Heart right ventricle (tissue), 16 donors: ENCODE measurements at regions of chr10 and their contacts with region 1.

Region 1: GRCh38 chr10:79184145-79184625 is 115.4 kb downstream of the ZMIZ1 start:
- DNase-seq: no peak
- ATAC-seq: peak in 1 of 8 donors; percentile 28
- H3K4me3 ChIP-seq: no peak overlapping the region
- H3K27ac ChIP-seq: peak overlapping the region; percentile 11 to 91 (median 58)
- H3K4me1 ChIP-seq: peaks cover 73 to 100% (median 100%) of the 10 kb centered on the region in 9 donors
- H3K27me3 ChIP-seq: no peaks in the 10 kb centered on the region
- CTCF ChIP-seq: no peak

Region 2: DNA sequence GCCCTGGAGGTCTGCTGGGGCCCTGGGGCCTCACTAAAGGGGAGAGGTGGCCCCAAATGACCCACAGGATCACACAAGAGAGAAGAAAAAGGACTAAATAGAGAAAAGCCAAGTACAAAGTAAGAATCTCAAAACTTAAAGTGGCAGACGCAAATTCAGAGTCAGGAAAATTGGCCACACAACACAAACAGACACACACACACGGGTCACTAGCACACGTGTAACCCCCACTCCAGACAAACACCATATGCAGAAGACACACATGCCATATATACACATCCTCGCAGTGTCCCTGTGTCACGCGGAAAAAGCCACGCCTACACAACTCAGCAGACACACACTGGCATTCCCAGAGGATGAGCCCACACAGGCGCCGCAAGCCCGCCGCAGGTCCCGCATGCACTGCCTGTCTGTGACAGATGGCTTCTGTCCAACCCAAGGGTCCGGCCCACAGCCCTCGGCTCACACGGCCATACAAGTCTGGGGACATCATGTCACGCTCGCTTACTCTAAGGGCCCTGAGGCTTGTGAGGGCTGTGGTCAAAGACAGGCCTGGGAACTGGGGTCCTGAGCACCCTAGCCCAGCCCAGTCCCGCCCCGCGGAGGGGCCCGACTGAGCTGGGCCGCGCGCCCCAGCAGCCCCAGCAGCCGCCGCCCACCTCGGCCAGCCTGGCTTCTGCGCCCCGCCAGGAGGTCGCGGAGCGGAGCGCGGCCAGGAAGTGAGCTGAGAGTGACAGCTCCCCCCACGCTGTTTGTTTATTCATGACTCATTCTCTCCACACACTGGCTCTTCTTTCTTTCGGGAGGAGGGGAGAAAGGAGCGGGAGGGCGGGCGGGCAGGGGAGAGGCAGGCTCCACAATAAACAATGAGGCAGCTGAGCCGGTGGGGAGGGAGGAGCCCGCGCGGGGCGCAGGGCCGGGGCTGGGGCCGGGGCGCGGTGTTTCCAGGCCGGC is 211.0 kb before region 1 on chr10:
- intact Hi-C with region 1: loop called in 1 of 10 experiments (anchors 10 kb)
- DNase-seq: peak; percentile 83 to 88
- ATAC-seq: peak; percentile 64 to 82 (median 75)
- H3K4me3 ChIP-seq: peak overlapping the region; percentile 15 to 60 (median 55)
- H3K27ac ChIP-seq: peak overlapping the region; percentile 94 to 99 (median 96)
- H3K4me1 ChIP-seq: peaks cover 12 to 45% (median 31%) of the 10 kb centered on the region in 9 donors
- H3K27me3 ChIP-seq: no peaks in the 10 kb centered on the region
- CTCF ChIP-seq: no peak

Region 3: GRCh38 chr10:79149662-79150443 is 34.3 kb before region 1 on chr10:
- intact Hi-C with region 1: loop called in 1 of 10 experiments (anchors 5 kb)
- DNase-seq: peak; percentile 86 to 90
- ATAC-seq: peak; percentile 54 to 74 (median 66)
- H3K4me3 ChIP-seq: peak overlapping the region in 2 of 10 donors; percentile 1 to 2
- H3K27ac ChIP-seq: peak overlapping the region; percentile 88 to 98 (median 93)
- H3K4me1 ChIP-seq: peaks cover 90 to 100% (median 100%) of the 10 kb centered on the region in 9 donors
- H3K27me3 ChIP-seq: no peaks in the 10 kb centered on the region
- CTCF ChIP-seq: no peak